SK-N-SH (cell line): ENCODE measurements at regions of chr13 and their contacts with region 1.

Region 1: DNA sequence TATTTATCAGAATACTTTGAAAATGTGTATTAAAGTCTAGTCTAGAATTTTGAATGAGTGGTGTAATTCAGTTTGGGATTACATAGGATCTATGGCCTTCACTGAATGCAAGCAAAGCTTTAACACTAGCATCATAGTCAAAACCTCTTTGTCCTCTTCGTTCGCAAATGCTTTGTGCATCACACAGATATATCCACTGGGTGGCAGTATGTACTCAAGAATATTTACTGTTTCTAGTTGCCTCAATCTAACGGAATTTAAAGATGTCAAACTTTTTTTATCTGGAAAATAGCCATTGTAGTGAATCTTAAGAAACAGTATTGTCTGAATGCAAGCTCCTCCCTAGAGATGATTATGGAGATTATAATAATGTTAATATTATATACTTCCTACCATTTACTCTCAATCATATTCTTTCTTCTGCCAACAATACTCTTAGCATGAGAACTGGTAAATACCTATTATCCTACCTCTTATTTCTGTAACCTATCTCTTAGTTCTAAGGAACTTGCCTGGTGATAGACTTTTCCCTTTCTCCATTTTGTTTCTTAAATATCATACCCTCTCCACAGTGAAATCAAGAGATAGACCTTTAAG is 25.8 kb downstream of the LACC1 start:
- DNase-seq: peak; percentile 63
- H3K4me3 ChIP-seq: no peak overlapping the region
- H3K27ac ChIP-seq: no peak overlapping the region
- H3K4me1 ChIP-seq: peaks cover 0 to 6% of the 10 kb centered on the region in 2 experiments; a peak in 1 of 4 replicates
- H3K27me3 ChIP-seq: no peaks in the 10 kb centered on the region
- CTCF ChIP-seq: peak; percentile 83
- EP300 ChIP-seq: no peak
- RAD21 ChIP-seq: peak; percentile 93

Region 2: DNA sequence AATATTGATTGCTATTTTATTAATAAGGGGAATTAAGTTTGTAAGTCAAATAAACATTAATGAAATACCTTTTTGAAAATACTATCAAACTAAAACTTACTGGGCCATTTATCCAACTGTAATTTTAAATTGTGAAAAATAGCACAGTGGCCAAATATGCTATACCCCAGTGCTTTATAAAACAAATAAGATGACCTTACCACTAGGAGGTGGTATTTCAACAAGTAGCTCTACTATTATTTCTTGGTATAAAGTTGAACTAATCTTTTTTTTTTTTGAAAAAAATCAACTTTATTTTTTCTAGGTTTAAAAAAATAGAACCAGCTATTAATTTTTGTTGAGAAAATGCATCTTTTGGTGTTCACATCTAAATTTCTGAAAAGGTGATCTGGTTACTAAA is 11.1 kb before region 1 on chr13:
- CTCF ChIA-PET with region 1: interaction called, 19 read pairs
- POLR2A ChIA-PET with region 1: no interaction called
- DNase-seq: no peak
- H3K4me3 ChIP-seq: no peak overlapping the region
- H3K27ac ChIP-seq: no peak overlapping the region
- H3K4me1 ChIP-seq: no peaks in the 10 kb centered on the region
- H3K27me3 ChIP-seq: no peaks in the 10 kb centered on the region
- CTCF ChIP-seq: peak; percentile 54
- EP300 ChIP-seq: no peak
- RAD21 ChIP-seq: no peak

Region 3: DNA sequence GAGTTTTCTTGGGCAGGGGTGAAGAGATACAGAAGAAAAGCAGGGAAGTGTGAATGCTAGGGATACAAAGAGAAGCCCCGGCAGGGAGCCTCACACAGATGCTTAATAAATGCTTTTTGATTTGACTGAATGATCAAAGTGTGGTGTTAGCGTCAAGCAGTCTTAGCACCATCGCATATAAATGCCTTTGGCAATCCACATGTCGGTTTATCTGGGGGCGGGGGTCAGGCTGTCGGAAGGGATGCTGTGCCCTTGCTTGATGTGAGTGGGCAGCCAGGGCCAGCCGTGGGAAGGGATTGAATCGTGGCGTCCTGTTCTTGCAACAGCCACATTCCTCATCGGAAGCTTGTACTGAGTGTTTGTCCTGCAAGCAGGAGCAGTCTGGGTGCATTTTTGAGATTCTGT is 147.2 kb after region 1 on chr13:
- CTCF ChIA-PET with region 1: interaction called, 19 read pairs
- POLR2A ChIA-PET with region 1: no interaction called
- DNase-seq: no peak
- H3K4me3 ChIP-seq: no peak overlapping the region
- H3K27ac ChIP-seq: no peak overlapping the region
- H3K4me1 ChIP-seq: no peaks in the 10 kb centered on the region; a peak in 2 of 4 replicates
- H3K27me3 ChIP-seq: no peaks in the 10 kb centered on the region
- CTCF ChIP-seq: no peak
- EP300 ChIP-seq: no peak
- RAD21 ChIP-seq: no peak

Region 4: GRCh38 chr13:44465318-44465717 is 559.8 kb after region 1 on chr13:
- CTCF ChIA-PET with region 1: interaction called, 47 read pairs
- POLR2A ChIA-PET with region 1: no interaction called
- DNase-seq: no peak
- H3K4me3 ChIP-seq: no peak overlapping the region
- H3K27ac ChIP-seq: no peak overlapping the region
- H3K4me1 ChIP-seq: peaks cover 14 to 15% of the 10 kb centered on the region in 2 experiments; a peak in 3 of 4 replicates
- H3K27me3 ChIP-seq: no peaks in the 10 kb centered on the region
- CTCF ChIP-seq: no peak
- EP300 ChIP-seq: no peak
- RAD21 ChIP-seq: no peak